HCT116 (cell line): ENCODE measurements at regions of chr19 and their contacts with region 1.

Region 1: GRCh38 chr19:9075064-9075949 is 11.6 kb upstream of the OR1M1 start:
- DNase-seq: peak; percentile 97
- ATAC-seq: peak; percentile 90
- H3K4me3 ChIP-seq: peak overlapping the region; percentile 9; a peak in 1 of 4 replicates
- H3K27ac ChIP-seq: peak overlapping the region; percentile 86
- H3K4me1 ChIP-seq: peaks cover 34 to 46% of the 10 kb centered on the region in 2 experiments
- H3K27me3 ChIP-seq: no peaks in the 10 kb centered on the region
- CTCF ChIP-seq: no peak
- POLR2A ChIP-seq: no peak
- RAD21 ChIP-seq: peak; percentile 50

Region 2: DNA sequence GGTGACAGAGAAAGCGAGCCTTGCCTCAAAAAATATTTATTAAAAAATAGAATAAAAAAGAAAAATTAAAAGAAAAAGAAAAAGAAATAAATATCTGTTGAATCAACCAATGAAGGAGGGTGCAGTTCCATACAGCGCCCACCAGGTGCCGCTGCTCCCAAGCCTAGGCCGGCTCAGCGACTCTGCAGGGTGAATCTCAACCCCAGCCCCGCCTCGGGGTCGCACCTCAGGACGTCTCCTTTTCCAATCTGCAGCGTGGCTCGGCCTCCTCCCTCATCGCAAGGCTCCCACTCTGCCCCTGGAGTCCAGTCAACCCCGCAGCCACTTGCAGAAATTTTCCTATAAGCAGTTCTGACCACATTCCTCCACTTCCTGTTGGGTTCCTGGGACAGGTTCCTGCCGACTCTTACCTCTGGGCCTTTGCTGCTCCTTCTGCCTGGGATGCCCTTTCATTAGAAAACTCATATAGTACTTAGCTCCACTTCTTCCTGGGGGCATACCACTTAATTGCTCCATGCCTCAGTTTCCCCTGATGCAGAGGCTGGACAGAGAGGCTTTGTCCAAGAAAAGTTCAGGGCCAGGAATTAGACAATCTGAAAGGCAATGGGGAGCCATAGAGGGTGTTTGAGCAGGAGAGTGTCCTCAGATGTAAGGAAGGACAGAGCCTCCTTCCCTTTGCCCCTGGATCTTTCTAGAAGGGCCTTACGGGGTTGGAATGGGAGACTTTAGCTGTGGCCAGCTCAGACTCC is 420.5 kb before region 1 on chr19:
- CTCF ChIA-PET with region 1: no interaction called
- POLR2A ChIA-PET with region 1: no interaction called
- RAD21 ChIA-PET with region 1: no interaction called
- intact Hi-C with region 1: loop called (anchors 1 kb)
- DNase-seq: peak; percentile 48
- ATAC-seq: peak; percentile 89
- H3K4me3 ChIP-seq: peak overlapping the region; percentile 15 to 38; a peak in 3 of 4 replicates
- H3K27ac ChIP-seq: no peak overlapping the region
- H3K4me1 ChIP-seq: peaks cover 0 to 7% of the 10 kb centered on the region in 2 experiments; a peak in 1 of 4 replicates
- H3K27me3 ChIP-seq: no peaks in the 10 kb centered on the region
- CTCF ChIP-seq: peak; percentile 75 to 91 (median 78); a peak in 5 of 6 replicates
- POLR2A ChIP-seq: no peak
- RAD21 ChIP-seq: peak; percentile 87

Region 3: GRCh38 chr19:8697671-8698432 is 377.5 kb before region 1 on chr19:
- CTCF ChIA-PET with region 1: interaction called, 4 read pairs
- POLR2A ChIA-PET with region 1: no interaction called
- RAD21 ChIA-PET with region 1: interaction called in 1 of 2 experiments, 3 read pairs
- intact Hi-C with region 1: loop called (anchors 1 kb)
- DNase-seq: no peak
- ATAC-seq: peak; percentile 45; the same call in 1 of the 2 replicates
- H3K4me3 ChIP-seq: no peak overlapping the region
- H3K27ac ChIP-seq: no peak overlapping the region
- H3K4me1 ChIP-seq: no peaks in the 10 kb centered on the region; a peak in 1 of 4 replicates
- H3K27me3 ChIP-seq: 0 out of 2 replicates have a peak, but pooled peaks cover 6% of the 10 kb centered on the region
- CTCF ChIP-seq: peak in 2 of 3 experiments; percentile 50 to 58; a peak in 5 of 6 replicates
- POLR2A ChIP-seq: no peak
- RAD21 ChIP-seq: peak; percentile 49

Region 4: GRCh38 chr19:8826383-8826782 is 248.9 kb before region 1 on chr19:
- CTCF ChIA-PET with region 1: no interaction called
- POLR2A ChIA-PET with region 1: no interaction called
- RAD21 ChIA-PET with region 1: no interaction called
- intact Hi-C with region 1: loop called (anchors 2 kb)
- DNase-seq: no peak
- ATAC-seq: peak; percentile 82
- H3K4me3 ChIP-seq: no peak overlapping the region
- H3K27ac ChIP-seq: no peak overlapping the region
- H3K4me1 ChIP-seq: peaks cover under 1 to 5% of the 10 kb centered on the region in 2 experiments; a peak in 2 of 4 replicates
- H3K27me3 ChIP-seq: no peaks in the 10 kb centered on the region
- CTCF ChIP-seq: peak in 2 of 3 experiments; percentile 27; a peak in 3 of 6 replicates
- POLR2A ChIP-seq: no peak
- RAD21 ChIP-seq: peak; percentile 47

Region 5: DNA sequence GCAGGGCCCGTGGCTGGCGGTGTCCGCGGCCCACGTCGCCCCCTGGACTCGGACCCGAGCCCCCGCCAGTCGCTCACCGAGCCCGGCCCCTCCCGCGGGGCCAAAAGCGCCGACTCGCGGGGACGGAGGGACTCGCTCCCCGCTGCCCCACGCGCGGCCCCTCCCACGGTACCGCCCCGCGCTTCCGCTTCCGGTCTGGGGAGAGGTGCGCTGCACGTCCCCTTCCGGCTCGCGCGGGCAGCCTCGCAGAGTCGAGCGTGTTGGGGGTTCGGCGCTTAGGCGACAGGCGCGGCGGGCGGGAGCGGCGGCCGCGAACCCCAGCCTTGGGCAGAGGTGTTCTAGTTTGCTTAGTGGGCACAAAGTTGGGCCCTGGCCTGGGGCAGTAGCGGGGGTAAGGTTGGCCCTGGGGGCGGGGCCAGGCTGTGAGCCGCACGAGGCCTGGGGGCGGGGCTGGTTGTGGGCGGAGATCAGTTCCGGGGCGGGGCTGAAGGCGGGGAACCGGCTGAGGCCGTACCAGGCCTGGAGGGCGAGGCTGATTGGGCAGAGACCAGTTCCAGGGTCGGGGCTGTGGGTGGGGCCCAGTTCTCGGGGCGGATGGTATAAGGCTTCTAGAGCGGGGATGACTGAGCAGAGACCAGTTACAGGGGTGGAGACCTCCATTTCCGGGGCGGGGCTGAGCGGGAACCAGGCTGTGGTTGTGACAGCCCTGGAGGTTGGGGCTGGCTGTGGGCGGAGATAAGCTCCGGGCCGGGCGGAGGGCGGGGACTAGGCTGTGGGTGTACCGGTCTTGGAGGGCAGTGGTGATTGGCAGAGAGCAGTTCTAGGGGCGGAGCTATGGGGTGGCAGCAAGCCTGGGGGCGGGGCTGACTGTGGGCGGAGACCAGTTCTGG is 242.9 kb before region 1 on chr19 and contains the starts of genes MBD3L1 and ZNF558:
- CTCF ChIA-PET with region 1: no interaction called
- POLR2A ChIA-PET with region 1: interaction called, 5 read pairs
- RAD21 ChIA-PET with region 1: interaction called in 1 of 2 experiments, 4 read pairs
- intact Hi-C with region 1: loop called (anchors 2 kb)
- DNase-seq: peak; percentile 93
- ATAC-seq: peak; percentile 92
- H3K4me3 ChIP-seq: peak within 1 kb of the TSS; percentile 58 to 95
- H3K27ac ChIP-seq: peak within 1 kb of the TSS; percentile 89
- H3K4me1 ChIP-seq: peaks cover 5 to 19% of the 10 kb centered on the region in 2 experiments; a peak in 2 of 4 replicates
- H3K27me3 ChIP-seq: no peaks in the 10 kb centered on the region
- CTCF ChIP-seq: no peak
- POLR2A ChIP-seq: peak; percentile 43
- RAD21 ChIP-seq: no peak; the same call in 1 of the 2 replicates
- total RNA-seq, gene MBD3L1: not detected
- total RNA-seq, gene ZNF558: 34.2 TPM

Region 6: GRCh38 chr19:9018163-9018875 is 57.0 kb before region 1 on chr19:
- CTCF ChIA-PET with region 1: no interaction called
- POLR2A ChIA-PET with region 1: no interaction called
- RAD21 ChIA-PET with region 1: interaction called in 1 of 2 experiments, 3 read pairs
- intact Hi-C with region 1: loop called (anchors 2 kb)
- DNase-seq: peak; percentile 82
- ATAC-seq: peak; percentile 89
- H3K4me3 ChIP-seq: peak overlapping the region; percentile 37 to 45
- H3K27ac ChIP-seq: peak overlapping the region; percentile 93
- H3K4me1 ChIP-seq: peaks cover 16 to 40% of the 10 kb centered on the region in 2 experiments
- H3K27me3 ChIP-seq: no peaks in the 10 kb centered on the region
- CTCF ChIP-seq: no peak
- POLR2A ChIP-seq: no peak
- RAD21 ChIP-seq: peak; percentile 31; the same call in 1 of the 2 replicates

Region 7: DNA sequence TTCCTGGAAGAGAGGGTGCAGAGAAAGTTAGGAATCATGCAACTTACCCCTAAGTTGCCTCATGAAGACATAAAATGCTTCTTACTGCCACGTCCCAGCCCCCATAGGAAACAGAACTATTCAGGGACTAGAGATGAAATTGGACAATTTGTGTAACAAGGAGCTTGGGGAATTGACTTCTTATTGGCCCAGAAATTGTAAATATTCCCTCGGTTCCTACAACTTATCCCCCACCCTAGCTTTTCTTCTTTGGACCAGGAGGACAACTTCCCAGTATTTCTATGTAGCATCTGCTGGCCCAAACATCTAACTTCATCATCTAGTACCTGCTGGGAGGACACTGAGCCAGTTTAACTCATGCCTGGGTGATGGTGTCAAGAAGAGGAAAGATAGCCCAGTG is 11.5 kb after region 1 on chr19 and contains the start of gene OR1M1:
- CTCF ChIA-PET with region 1: no interaction called
- POLR2A ChIA-PET with region 1: no interaction called
- RAD21 ChIA-PET with region 1: no interaction called
- intact Hi-C with region 1: no loop called
- DNase-seq: no peak
- ATAC-seq: no peak
- H3K4me3 ChIP-seq: no peak within 1 kb of the TSS
- H3K27ac ChIP-seq: no peak within 1 kb of the TSS
- H3K4me1 ChIP-seq: no peaks in the 10 kb centered on the region
- H3K27me3 ChIP-seq: no peaks in the 10 kb centered on the region
- CTCF ChIP-seq: no peak
- POLR2A ChIP-seq: no peak
- RAD21 ChIP-seq: no peak
- total RNA-seq, gene OR1M1: not detected

Region 8: GRCh38 chr19:9115307-9115813 is 40.1 kb after region 1 on chr19 and contains the start of gene OR7G1:
- CTCF ChIA-PET with region 1: no interaction called
- POLR2A ChIA-PET with region 1: no interaction called
- RAD21 ChIA-PET with region 1: no interaction called
- intact Hi-C with region 1: no loop called
- DNase-seq: no peak
- ATAC-seq: no peak
- H3K4me3 ChIP-seq: no peak within 1 kb of the TSS
- H3K27ac ChIP-seq: no peak within 1 kb of the TSS
- H3K4me1 ChIP-seq: no peaks in the 10 kb centered on the region
- H3K27me3 ChIP-seq: no peaks in the 10 kb centered on the region
- CTCF ChIP-seq: no peak
- POLR2A ChIP-seq: no peak
- RAD21 ChIP-seq: no peak
- total RNA-seq, gene OR7G1: not detected